Panc1 (cell line): ENCODE measurements at regions of chr6 and their contacts with region 1.

Region 1: GRCh38 chr6:38871741-38872568 is 156.8 kb downstream of the DNAH8 start:
- DNase-seq: peak; percentile 48
- ATAC-seq: peak; percentile 84
- H3K4me3 ChIP-seq: no peak overlapping the region
- H3K27ac ChIP-seq: no peak overlapping the region
- H3K4me1 ChIP-seq: no peaks in the 10 kb centered on the region
- H3K27me3 ChIP-seq: peaks cover 6% of the 10 kb centered on the region
- CTCF ChIP-seq: peak; percentile 95

Region 2: GRCh38 chr6:38824243-38824894 is 47.6 kb before region 1 on chr6:
- CTCF ChIA-PET with region 1: no interaction called
- POLR2A ChIA-PET with region 1: no interaction called
- in situ Hi-C with region 1: no loop called
- intact Hi-C with region 1: no loop called
- DNase-seq: no peak
- ATAC-seq: no peak
- H3K4me3 ChIP-seq: no peak overlapping the region
- H3K27ac ChIP-seq: no peak overlapping the region
- H3K4me1 ChIP-seq: no peaks in the 10 kb centered on the region
- H3K27me3 ChIP-seq: peaks cover 5% of the 10 kb centered on the region; the same call in 1 of the 2 replicates
- CTCF ChIP-seq: no peak

Region 3: GRCh38 chr6:38909015-38909730 is 37.2 kb after region 1 on chr6:
- CTCF ChIA-PET with region 1: no interaction called
- POLR2A ChIA-PET with region 1: no interaction called
- in situ Hi-C with region 1: no loop called
- intact Hi-C with region 1: no loop called
- DNase-seq: no peak
- ATAC-seq: no peak
- H3K4me3 ChIP-seq: no peak overlapping the region
- H3K27ac ChIP-seq: no peak overlapping the region
- H3K4me1 ChIP-seq: no peaks in the 10 kb centered on the region
- H3K27me3 ChIP-seq: peaks cover 6% of the 10 kb centered on the region
- CTCF ChIP-seq: no peak

Region 4: DNA sequence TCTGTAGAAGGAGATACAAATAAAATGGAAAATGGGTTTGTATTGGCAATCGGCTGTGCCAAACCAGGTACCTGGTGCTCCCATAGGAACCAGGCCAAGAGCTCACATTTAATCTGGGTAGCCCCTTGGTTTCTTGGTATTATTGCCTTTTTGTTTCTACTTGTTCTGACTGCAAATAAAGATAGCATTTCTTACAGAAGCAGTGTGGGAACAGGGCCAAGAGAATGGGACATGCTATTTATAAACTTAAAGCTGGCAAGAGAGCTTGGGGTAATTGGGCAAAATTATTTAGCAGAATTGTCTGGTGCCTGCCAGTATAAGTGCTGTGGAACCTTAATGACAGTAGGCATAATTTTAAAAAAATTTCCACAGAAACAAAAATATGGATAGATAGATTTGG is 63.1 kb after region 1 on chr6:
- CTCF ChIA-PET with region 1: no interaction called
- POLR2A ChIA-PET with region 1: no interaction called
- in situ Hi-C with region 1: no loop called
- intact Hi-C with region 1: loop called (anchors 2 kb)
- DNase-seq: no peak
- ATAC-seq: no peak
- H3K4me3 ChIP-seq: no peak overlapping the region
- H3K27ac ChIP-seq: no peak overlapping the region
- H3K4me1 ChIP-seq: no peaks in the 10 kb centered on the region
- H3K27me3 ChIP-seq: peaks cover 14% of the 10 kb centered on the region
- CTCF ChIP-seq: no peak

Region 5: DNA sequence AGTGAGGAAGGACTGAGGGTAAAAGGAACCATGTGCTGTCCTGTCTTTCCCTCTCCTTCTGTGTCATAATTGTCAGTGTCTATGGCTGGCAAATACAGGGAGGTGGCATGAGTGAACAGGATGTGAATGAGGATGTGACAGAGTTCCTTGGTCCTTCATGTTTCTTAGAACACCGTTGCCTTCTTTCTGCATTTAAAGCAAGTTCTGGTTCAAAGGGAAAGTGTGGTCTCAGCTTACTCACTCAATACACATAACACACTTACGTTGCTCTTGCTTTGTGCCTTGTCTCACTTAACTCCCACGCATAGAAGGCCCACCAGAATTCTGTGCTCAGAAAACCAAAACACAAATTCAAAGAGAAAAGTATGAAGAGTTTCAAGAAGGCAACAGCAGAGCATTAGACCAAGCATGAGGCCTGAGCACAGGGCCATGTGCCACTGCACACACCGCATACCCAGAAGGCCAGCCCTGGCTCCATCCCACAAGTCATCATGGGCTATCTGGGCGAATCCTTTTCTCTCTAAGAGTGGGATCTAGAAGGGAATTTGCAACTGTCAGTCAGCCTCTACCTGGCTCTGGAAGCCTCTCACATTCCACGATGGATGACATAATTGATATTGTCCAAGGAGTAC is 281.9 kb after region 1 on chr6:
- CTCF ChIA-PET with region 1: no interaction called
- POLR2A ChIA-PET with region 1: no interaction called
- in situ Hi-C with region 1: no loop called
- intact Hi-C with region 1: loop called (anchors 5 kb)
- DNase-seq: no peak
- ATAC-seq: no peak
- H3K4me3 ChIP-seq: no peak overlapping the region
- H3K27ac ChIP-seq: no peak overlapping the region
- H3K4me1 ChIP-seq: no peaks in the 10 kb centered on the region
- H3K27me3 ChIP-seq: peaks cover 21% of the 10 kb centered on the region
- CTCF ChIP-seq: no peak

Region 6: GRCh38 chr6:39309942-39310531 is 438.1 kb after region 1 on chr6:
- CTCF ChIA-PET with region 1: interaction called, 5 read pairs
- POLR2A ChIA-PET with region 1: no interaction called
- in situ Hi-C with region 1: no loop called
- intact Hi-C with region 1: loop called (anchors 5 kb)
- DNase-seq: peak; percentile 64
- ATAC-seq: peak; percentile 92
- H3K4me3 ChIP-seq: no peak overlapping the region
- H3K27ac ChIP-seq: no peak overlapping the region
- H3K4me1 ChIP-seq: no peaks in the 10 kb centered on the region
- H3K27me3 ChIP-seq: no peaks in the 10 kb centered on the region; the same call in 1 of the 2 replicates
- CTCF ChIP-seq: peak; percentile 91